ENCODE measurements at regions of chr21 and their contacts with region 1.

Region 1: DNA sequence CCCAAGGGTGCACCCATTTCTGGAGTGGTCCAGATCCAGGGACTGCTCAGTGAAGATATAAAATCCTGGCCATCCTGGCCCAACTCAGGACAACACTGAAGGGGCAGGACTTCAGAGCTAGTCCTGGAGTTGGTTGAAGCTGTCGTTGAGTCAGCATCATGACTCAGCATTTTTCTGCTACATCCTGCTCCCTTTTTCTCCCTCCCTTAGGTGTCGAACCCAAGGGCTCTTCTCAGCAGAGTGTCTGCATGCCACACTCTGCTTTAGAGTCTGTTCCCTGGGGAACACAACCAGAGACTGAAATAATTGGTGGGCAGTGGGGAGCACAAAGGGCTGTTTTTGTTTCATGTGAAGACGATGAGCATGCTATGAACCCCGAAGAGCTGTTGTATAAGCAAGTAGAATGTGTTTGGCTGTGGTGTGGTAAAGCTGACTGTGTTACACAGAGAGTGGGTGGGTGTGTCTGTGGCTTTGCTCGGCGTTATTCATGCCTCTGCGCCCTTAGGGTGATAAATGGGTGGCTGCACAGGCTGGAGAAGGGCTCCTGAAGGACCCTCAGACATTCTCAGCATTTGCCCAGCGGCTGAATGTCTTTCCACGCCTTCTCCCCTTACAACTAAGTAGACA is 167.2 kb downstream of the CYYR1 start:
- DNase-seq: no peak
- ATAC-seq: no peak

Region 2: GRCh38 chr21:25997788-25998611 is 407.8 kb before region 1 on chr21:
- intact Hi-C with region 1: no loop called
- DNase-seq: no peak
- ATAC-seq: no peak

Region 3: DNA sequence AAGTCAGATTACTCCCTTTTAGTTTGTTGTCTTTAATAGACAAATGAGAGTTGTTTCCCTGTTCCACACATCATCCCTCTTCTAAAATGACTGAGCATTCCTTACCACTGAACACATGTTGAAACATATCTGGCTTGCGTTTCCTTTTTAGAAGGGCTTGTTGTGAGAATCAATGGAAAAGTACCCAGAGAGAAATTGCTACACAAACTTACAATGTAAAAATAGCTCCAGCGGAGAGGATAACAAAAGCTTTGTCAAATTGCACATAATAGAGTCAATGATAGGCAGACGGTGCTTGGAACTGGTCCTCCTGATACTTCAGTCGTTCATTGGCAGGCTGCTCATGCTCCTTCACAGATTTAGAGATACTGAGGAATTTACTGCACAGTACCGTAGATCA is 43.3 kb after region 1 on chr21:
- intact Hi-C with region 1: loop called (anchors 5 kb)
- DNase-seq: no peak
- ATAC-seq: peak; percentile 80

Region 4: DNA sequence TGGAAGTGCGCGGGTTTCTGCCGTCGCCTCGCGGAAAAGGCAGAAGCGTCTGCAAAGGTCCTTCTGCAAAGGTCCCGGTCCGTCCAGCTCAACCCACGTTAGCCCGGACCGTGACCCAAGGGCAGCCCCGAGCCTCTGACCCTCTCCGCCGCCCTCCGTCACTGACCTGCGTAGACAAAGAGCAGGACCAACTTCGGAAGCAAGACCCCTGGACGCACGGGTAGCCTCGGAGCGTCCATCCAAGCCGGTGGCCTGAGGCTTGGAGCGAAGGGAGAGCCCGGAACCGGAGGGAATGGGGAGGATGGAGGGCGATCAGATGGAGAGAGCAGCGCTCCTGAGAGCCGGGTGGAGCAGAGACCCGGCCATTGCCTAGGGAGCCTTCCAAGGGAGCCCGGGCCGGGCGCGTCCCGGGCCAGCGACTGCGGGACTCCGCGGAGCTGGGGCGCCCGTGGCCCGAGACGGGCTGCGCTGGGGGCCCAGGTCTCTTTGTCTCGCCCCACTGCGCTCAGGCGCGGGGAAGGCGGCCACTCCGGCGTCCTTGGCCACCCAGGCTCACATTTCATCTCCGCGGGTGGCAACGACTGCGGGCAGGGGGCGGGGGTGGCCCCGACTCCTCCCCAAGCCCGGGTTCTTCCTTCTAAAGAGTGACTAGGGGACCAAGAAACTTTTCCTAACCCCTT is 167.0 kb after region 1 on chr21 and contains the start of gene CYYR1:
- intact Hi-C with region 1: loop called (anchors 10 kb)
- DNase-seq: peak; percentile 72
- ATAC-seq: peak; percentile 23
- total RNA-seq, gene CYYR1: 27.3 TPM